Posterior cingulate gyrus (tissue), 11 donors: ENCODE measurements at regions of chr1 and their contacts with region 1.

Region 1: DNA sequence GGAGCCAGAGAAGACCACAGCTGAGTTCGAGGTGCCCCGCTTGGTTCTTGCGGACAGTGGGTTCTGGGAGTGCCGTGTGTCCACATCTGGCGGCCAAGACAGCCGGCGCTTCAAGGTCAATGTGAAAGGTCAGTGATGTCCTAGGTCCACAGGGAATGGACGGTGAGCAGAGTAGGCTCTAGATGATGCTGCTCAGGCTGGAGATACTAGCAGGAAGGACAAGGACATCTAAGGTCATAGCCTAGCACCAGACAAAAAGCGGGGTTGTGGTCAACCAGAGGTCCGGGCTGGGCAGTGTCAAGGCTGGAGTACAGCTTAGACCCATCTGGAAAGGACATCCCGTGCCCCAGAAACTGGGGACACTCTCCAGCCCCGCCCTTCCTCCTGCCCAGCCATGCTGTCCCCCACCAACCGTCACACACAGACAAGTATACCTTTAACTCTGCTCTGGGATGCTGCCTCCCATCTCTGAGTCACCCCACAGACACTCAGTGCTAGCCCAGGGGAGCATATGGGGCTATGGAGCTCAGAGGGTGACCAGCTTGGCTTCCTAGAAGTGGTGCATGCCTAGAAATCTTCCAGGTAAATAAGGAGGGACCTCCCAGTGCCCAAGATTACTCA is 8.7 kb downstream of the TIE1 start:
- DNase-seq: peak in 3 of 10 donors; percentile 31 to 68 (median 49)

Region 2: GRCh38 chr1:42567043-42567442 is 742.5 kb before region 1 on chr1:
- intact Hi-C with region 1: no loop called
- DNase-seq: no peak

Region 3: DNA sequence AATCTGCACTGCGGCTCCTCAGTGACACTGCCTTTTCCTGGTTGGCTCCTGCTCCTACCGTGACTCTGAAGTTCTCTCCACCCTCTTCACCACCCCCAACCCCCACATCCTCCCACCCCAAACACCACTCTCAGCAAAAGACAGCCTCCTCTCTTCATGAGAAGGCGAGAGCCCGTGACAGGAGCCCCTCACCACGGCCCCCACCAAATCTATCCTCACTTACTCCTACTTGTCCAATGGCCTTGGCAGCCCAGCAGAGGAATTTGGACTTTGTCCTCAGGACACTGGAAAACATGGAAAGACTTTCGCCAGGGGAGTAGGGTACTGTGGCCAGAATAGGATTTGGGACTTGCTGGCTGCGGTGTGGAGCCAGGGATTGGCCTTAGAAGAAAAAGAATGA is 32.8 kb before region 1 on chr1:
- intact Hi-C with region 1: loop called (anchors 2 kb)
- DNase-seq: peak in 2 of 10 donors; percentile 25 to 33

Region 4: GRCh38 chr1:43358746-43359693 is 49.5 kb after region 1 on chr1 and contains the start of gene CDC20:
- intact Hi-C with region 1: no loop called
- DNase-seq: peak; percentile 95 to 100 (median 98)